ENCODE measurements at regions of chr10 and their contacts with region 1.

Region 1: GRCh38 chr10:13371897-13372470 is 23.9 kb upstream of the SEPHS1 start:
- DNase-seq: no peak
- H3K4me3 ChIP-seq: no peak overlapping the region
- H3K27me3 ChIP-seq: peaks cover 5% of the 10 kb centered on the region; the same call in 1 of the 2 replicates
- CTCF ChIP-seq: peak; percentile 95

Region 2: DNA sequence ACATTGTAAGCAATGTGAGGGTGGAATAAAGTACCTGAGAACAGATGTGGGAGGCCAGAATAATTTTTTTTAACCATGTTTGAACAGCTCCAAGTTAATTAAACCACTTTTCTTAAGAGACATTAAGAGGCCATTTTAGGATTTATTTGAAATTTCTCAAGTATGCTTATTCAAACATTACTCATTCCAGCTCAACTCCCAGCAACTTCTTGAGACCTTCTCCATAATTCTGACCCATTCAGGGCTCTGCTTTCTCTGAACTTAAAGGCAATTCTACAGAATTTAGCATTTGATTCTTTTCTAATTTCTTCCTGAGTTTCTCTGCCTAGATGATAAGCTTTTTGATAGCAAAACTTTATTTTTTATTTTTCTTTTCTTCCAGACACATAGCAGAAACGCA is 708.1 kb before region 1 on chr10:
- CTCF ChIA-PET with region 1: no interaction called
- POLR2A ChIA-PET with region 1: no interaction called
- DNase-seq: no peak
- H3K4me3 ChIP-seq: no peak overlapping the region
- H3K27me3 ChIP-seq: no peaks in the 10 kb centered on the region
- CTCF ChIP-seq: no peak

Region 3: GRCh38 chr10:13219685-13220670 is 152.0 kb before region 1 on chr10:
- CTCF ChIA-PET with region 1: no interaction called
- POLR2A ChIA-PET with region 1: no interaction called
- DNase-seq: no peak
- H3K4me3 ChIP-seq: no peak overlapping the region
- H3K27me3 ChIP-seq: no peaks in the 10 kb centered on the region
- CTCF ChIP-seq: no peak

Region 4: GRCh38 chr10:13382703-13383398 is 10.9 kb after region 1 on chr10:
- CTCF ChIA-PET with region 1: interaction called, 21 read pairs
- POLR2A ChIA-PET with region 1: no interaction called
- DNase-seq: no peak
- H3K4me3 ChIP-seq: no peak overlapping the region
- H3K27me3 ChIP-seq: peaks cover 12% of the 10 kb centered on the region
- CTCF ChIP-seq: no peak

Region 5: GRCh38 chr10:13440185-13441061 is 68.4 kb after region 1 on chr10:
- CTCF ChIA-PET with region 1: interaction called, 14 read pairs
- POLR2A ChIA-PET with region 1: no interaction called
- DNase-seq: no peak
- H3K4me3 ChIP-seq: peak overlapping the region; percentile 25
- H3K27me3 ChIP-seq: peaks cover 11% of the 10 kb centered on the region
- CTCF ChIP-seq: peak; percentile 94

Region 6: GRCh38 chr10:13536674-13537366 is 164.8 kb after region 1 on chr10:
- CTCF ChIA-PET with region 1: interaction called, 47 read pairs
- POLR2A ChIA-PET with region 1: no interaction called
- DNase-seq: no peak
- H3K4me3 ChIP-seq: no peak overlapping the region
- H3K27me3 ChIP-seq: peaks cover 8% of the 10 kb centered on the region
- CTCF ChIP-seq: peak; percentile 75

Region 7: GRCh38 chr10:13597909-13598308 is 225.9 kb after region 1 on chr10:
- CTCF ChIA-PET with region 1: no interaction called
- POLR2A ChIA-PET with region 1: interaction called, 17 read pairs
- DNase-seq: no peak
- H3K4me3 ChIP-seq: no peak overlapping the region
- H3K27me3 ChIP-seq: no peaks in the 10 kb centered on the region
- CTCF ChIP-seq: no peak

Measured in BJ (cell line).